IMR-90 (cell line): ENCODE measurements at regions of chr5 and their contacts with region 1.

Region 1: DNA sequence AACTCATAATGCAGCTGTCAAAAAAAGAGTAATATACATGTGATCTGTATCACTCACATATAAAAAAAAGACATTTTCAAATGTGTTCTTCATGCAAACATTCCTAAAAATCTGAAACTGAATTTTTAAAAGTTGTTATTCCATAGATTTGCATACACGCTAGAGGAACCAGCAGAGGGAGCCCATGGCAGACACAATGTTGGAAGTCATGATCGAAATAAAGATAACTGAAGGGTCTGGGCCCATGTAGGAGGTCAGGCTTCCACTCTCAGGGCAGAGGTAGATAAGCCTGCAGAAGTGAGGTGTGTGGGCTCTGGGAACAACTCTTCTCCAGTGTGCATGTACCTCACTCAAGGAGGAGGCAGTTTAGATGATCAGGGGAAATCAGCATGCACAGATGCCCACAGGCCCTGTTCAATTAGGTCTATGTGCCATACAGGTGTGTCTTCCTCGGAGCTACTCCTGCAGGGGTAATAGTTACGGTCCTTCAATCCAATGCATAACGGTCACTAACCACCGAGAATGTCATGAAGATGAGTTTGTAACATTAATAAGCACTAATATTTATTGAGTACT is 208.6 kb downstream of the EPB41L4A start:
- DNase-seq: peak; percentile 17
- ATAC-seq: peak; percentile 71; the same call in 1 of the 2 replicates
- H3K4me3 ChIP-seq: no peak overlapping the region
- H3K27ac ChIP-seq: no peak overlapping the region
- H3K4me1 ChIP-seq: no peaks in the 10 kb centered on the region
- H3K27me3 ChIP-seq: 0 out of 2 replicates have a peak, but pooled peaks cover 2% of the 10 kb centered on the region
- CTCF ChIP-seq: peak; percentile 58
- POLR2A ChIP-seq: no peak
- RAD21 ChIP-seq: peak; percentile 48

Region 2: DNA sequence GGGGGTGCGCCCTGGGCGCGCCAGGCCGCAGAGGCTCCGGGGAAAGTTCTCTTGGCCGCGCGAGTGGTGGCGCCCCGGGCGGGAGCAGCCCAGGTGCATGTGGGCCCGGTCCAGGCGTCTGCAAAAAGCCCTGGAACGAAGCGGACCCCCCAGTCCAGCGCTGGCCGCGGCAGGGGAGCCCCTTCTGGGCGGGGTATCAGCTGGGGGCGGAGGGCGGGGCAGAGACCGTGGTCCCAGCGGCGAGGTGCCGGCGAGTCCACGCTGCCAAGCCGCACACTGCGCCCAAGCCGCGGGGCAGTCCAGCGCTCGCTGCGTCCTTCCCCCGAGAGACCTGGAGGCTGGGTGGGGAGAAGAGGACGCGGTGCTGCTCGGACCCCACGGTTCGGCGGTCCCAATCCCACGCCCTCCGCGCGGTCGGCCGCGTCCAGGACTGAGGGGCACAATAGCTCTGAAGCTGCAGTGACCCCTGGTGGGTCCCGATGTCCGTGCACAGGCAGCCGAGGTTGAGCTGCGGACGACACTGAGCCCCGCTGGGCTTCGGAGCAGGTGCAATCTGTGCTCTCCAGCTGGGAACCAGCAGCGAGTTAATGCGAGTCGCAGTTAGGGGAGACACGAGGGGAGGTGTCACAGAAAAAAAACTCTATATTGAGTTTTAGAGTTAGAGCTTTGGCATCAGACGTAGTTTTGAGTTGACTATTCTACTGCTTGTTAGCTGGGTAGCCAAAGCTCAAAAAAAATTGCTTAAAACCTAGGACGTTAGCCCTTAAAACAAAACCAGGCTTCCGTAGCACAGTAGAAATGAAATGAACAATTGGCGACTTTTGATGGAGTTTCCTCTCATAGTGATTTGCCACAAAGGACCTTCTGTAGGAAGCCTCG is 209.7 kb after region 1 on chr5:
- CTCF ChIA-PET with region 1: interaction called, 5 read pairs
- POLR2A ChIA-PET with region 1: no interaction called
- dilution Hi-C with region 1: no loop called
- in situ Hi-C with region 1: no loop called
- intact Hi-C with region 1: loop called (anchors 10 kb)
- DNase-seq: peak; percentile 5
- ATAC-seq: peak; percentile 89
- H3K4me3 ChIP-seq: peak overlapping the region; percentile 40; the same call in 1 of the 2 replicates
- H3K27ac ChIP-seq: no peak overlapping the region
- H3K4me1 ChIP-seq: no peaks in the 10 kb centered on the region
- H3K27me3 ChIP-seq: peaks cover 33% of the 10 kb centered on the region
- CTCF ChIP-seq: peak; percentile 43
- POLR2A ChIP-seq: no peak
- RAD21 ChIP-seq: peak; percentile 48

Region 3: GRCh38 chr5:112492291-112492690 is 281.8 kb after region 1 on chr5:
- CTCF ChIA-PET with region 1: no interaction called
- POLR2A ChIA-PET with region 1: no interaction called
- dilution Hi-C with region 1: no loop called
- in situ Hi-C with region 1: no loop called
- intact Hi-C with region 1: loop called (anchors 2 kb)
- DNase-seq: peak; percentile 23
- ATAC-seq: peak; percentile 69
- H3K4me3 ChIP-seq: no peak overlapping the region
- H3K27ac ChIP-seq: no peak overlapping the region
- H3K4me1 ChIP-seq: no peaks in the 10 kb centered on the region
- H3K27me3 ChIP-seq: no peaks in the 10 kb centered on the region
- CTCF ChIP-seq: peak; percentile 40
- POLR2A ChIP-seq: no peak
- RAD21 ChIP-seq: peak; percentile 12; the same call in 1 of the 2 replicates

Region 4: DNA sequence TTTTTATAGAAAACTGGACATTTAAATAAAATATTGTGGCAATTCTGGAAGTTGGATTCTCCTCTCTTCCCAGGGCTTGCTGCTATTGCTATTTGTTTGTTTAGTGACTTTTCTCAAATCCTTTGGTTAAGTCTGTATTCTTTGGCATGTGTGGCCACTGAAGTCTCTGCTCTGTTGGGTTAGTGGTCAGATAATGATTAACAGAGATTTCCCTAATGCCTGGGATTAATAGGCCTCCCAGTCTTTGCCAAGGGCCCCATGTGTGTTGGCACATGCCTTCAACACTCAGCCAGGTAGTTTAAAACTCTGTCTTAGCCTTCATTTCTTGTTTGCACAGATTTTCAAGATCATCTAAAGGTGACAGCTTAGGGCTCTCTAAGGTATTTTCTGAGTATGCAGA is 301.4 kb after region 1 on chr5:
- CTCF ChIA-PET with region 1: no interaction called
- POLR2A ChIA-PET with region 1: no interaction called
- dilution Hi-C with region 1: no loop called
- in situ Hi-C with region 1: no loop called
- intact Hi-C with region 1: no loop called
- DNase-seq: no peak
- ATAC-seq: no peak
- H3K4me3 ChIP-seq: no peak overlapping the region
- H3K27ac ChIP-seq: no peak overlapping the region
- H3K4me1 ChIP-seq: no peaks in the 10 kb centered on the region
- H3K27me3 ChIP-seq: no peaks in the 10 kb centered on the region
- CTCF ChIP-seq: no peak
- POLR2A ChIP-seq: no peak
- RAD21 ChIP-seq: no peak

Region 5: DNA sequence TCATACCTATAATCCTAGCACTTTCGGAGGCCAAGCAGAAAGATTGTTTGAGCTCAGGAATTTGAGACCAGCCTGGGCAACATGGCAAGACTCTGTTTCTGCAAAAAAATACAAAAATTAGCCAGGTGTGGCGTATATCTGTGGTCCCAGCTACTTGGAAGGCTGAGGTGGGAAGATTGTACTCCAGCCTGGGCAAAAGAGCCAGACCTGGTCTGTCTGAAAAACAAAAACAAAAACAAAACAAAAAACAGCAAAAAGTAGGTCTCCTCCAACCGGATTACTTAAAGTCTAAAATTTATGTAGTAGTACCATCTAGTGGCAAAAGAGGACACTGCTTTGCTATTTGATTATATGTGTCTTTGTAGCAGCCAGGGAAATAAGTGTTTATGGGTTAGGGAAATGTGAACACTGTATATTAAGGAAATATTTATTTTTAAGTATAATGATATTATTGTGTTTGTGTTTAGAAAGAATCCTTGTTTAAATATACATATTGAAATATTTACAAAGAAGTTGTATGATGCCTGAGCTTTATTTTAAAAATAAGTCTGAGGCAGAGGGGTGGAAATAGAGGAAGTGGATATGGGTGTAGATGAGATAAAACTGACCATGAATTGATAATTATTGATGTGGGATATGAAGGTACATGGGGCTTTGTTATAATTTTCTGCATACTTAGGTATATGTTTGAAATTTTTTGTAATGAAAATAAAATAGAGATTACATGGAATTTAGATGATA is 547.1 kb after region 1 on chr5:
- CTCF ChIA-PET with region 1: no interaction called
- POLR2A ChIA-PET with region 1: no interaction called
- dilution Hi-C with region 1: no loop called
- in situ Hi-C with region 1: no loop called
- intact Hi-C with region 1: loop called (anchors 5 kb)
- DNase-seq: peak; percentile 68
- ATAC-seq: peak; percentile 89
- H3K4me3 ChIP-seq: no peak overlapping the region
- H3K27ac ChIP-seq: no peak overlapping the region
- H3K4me1 ChIP-seq: no peaks in the 10 kb centered on the region
- H3K27me3 ChIP-seq: no peaks in the 10 kb centered on the region
- CTCF ChIP-seq: peak; percentile 82
- POLR2A ChIP-seq: no peak
- RAD21 ChIP-seq: peak; percentile 75